IMR-90 (cell line): ENCODE measurements at regions of chr3 and their contacts with region 1.

Region 1: GRCh38 chr3:52291508-52292181 is 4.0 kb downstream of the GLYCTK start:
- DNase-seq: no peak
- ATAC-seq: peak; percentile 16; the same call in 1 of the 2 replicates
- H3K4me3 ChIP-seq: no peak overlapping the region
- H3K27ac ChIP-seq: no peak overlapping the region
- H3K4me1 ChIP-seq: peaks cover 6% of the 10 kb centered on the region
- H3K27me3 ChIP-seq: no peaks in the 10 kb centered on the region
- CTCF ChIP-seq: peak; percentile 65
- POLR2A ChIP-seq: no peak
- RAD21 ChIP-seq: peak; percentile 81

Region 2: DNA sequence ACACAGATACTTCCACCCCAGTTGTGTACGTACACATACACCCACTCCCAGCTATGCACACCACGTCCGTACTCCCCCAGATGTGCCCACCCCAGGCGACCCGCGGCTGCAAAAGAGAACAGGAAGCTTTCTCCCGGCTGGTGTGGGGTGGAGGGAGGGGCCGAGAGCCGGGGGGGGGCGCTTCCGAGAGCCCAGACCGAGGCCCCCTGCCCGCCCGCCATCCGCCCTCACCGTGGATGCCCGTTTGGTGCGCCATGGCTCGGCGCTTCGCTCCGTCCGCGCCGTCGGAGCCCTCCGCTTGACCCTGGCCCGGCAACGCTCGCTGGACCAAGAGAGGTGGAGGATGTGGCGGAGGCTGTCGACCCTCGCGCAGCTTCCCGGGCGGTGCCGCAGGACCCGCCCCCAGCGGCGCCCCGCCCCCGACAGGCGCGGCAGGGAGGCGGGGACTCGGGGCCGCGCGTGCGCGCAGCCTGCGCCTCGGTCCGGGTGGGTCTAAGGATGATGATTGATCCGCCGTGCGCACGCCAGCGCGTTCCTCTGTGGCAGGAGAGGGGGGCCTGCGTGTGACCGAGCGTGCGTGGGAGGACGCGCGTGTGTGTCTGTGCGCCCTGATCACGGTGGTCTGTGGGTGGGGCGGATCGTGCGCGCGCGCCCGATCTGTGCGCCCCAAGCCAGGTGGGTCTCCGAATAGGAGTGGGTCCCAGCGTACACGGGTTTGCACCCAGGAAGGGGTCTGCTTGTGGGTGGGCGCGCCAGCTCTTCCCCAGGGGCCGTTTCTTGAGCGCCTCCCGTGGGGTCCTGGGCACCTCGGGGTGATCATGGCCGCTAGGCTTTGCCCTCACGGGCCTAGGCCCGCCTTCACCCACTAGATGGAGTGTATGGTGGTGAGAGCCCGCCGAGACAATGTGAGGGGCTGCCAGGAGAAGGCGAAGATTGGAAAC is 52.6 kb before region 1 on chr3 and contains the start of gene TWF2:
- CTCF ChIA-PET with region 1: no interaction called
- POLR2A ChIA-PET with region 1: no interaction called
- dilution Hi-C with region 1: no loop called
- in situ Hi-C with region 1: no loop called
- intact Hi-C with region 1: no loop called
- DNase-seq: peak; percentile 78
- ATAC-seq: peak; percentile 84
- H3K4me3 ChIP-seq: peak within 1 kb of the TSS; percentile 83
- H3K27ac ChIP-seq: peak within 1 kb of the TSS; percentile 91
- H3K4me1 ChIP-seq: peaks cover 26% of the 10 kb centered on the region
- H3K27me3 ChIP-seq: no peaks in the 10 kb centered on the region
- CTCF ChIP-seq: 0 out of 2 replicates have a peak, but pooled peaks have one; percentile 25
- POLR2A ChIP-seq: peak; percentile 71
- RAD21 ChIP-seq: no peak
- total RNA-seq, gene TWF2: 105 and 111 TPM in 2 replicates

Region 3: DNA sequence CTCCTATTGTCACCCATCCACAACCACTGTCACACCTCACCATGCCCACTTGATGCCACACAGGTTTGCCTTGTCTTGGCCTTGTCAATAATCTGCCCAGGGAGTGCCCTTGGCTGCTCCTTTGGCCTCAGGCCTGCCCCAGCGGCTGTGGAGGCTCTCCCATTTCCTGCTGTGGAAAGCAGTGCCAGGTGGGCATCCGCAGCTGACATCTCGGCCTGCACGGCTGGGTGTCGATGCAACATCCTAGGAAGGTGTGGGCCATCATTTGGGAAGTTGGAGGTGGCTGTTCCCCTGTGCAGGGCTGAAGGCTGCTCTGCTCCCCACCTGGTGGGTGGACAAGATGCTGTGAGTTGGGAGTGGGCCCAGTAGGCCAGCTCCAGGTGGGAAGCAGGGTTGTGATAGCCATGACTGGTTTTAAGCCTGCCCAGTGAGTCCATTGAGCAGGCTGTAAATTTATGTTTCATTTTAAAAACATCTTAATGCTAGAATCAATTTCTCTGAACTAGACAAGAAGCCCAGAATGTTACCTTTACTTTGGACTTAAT is 37.0 kb after region 1 on chr3:
- CTCF ChIA-PET with region 1: no interaction called
- POLR2A ChIA-PET with region 1: no interaction called
- dilution Hi-C with region 1: no loop called
- in situ Hi-C with region 1: no loop called
- intact Hi-C with region 1: no loop called
- DNase-seq: no peak
- ATAC-seq: no peak
- H3K4me3 ChIP-seq: no peak overlapping the region
- H3K27ac ChIP-seq: no peak overlapping the region
- H3K4me1 ChIP-seq: no peaks in the 10 kb centered on the region
- H3K27me3 ChIP-seq: no peaks in the 10 kb centered on the region
- CTCF ChIP-seq: no peak
- POLR2A ChIP-seq: no peak
- RAD21 ChIP-seq: no peak

Region 4: GRCh38 chr3:52385157-52385556 is 93.5 kb after region 1 on chr3:
- CTCF ChIA-PET with region 1: no interaction called
- POLR2A ChIA-PET with region 1: no interaction called
- dilution Hi-C with region 1: no loop called
- in situ Hi-C with region 1: no loop called
- intact Hi-C with region 1: loop called (anchors 5 kb)
- DNase-seq: peak; percentile 41
- ATAC-seq: peak; percentile 80
- H3K4me3 ChIP-seq: no peak overlapping the region
- H3K27ac ChIP-seq: no peak overlapping the region
- H3K4me1 ChIP-seq: no peaks in the 10 kb centered on the region
- H3K27me3 ChIP-seq: peaks cover 3% of the 10 kb centered on the region
- CTCF ChIP-seq: peak; percentile 65
- POLR2A ChIP-seq: no peak
- RAD21 ChIP-seq: peak; percentile 51

Region 5: GRCh38 chr3:52428151-52429005 is 136.7 kb after region 1 on chr3:
- CTCF ChIA-PET with region 1: no interaction called
- POLR2A ChIA-PET with region 1: no interaction called
- dilution Hi-C with region 1: no loop called
- in situ Hi-C with region 1: no loop called
- intact Hi-C with region 1: no loop called
- DNase-seq: peak; percentile 83
- ATAC-seq: peak; percentile 98
- H3K4me3 ChIP-seq: no peak overlapping the region
- H3K27ac ChIP-seq: no peak overlapping the region
- H3K4me1 ChIP-seq: peaks cover 4% of the 10 kb centered on the region; the same call in 1 of the 2 replicates
- H3K27me3 ChIP-seq: peaks cover 5% of the 10 kb centered on the region; the same call in 1 of the 2 replicates
- CTCF ChIP-seq: peak; percentile 85
- POLR2A ChIP-seq: 0 out of 2 replicates have a peak, but pooled peaks have one; percentile 28
- RAD21 ChIP-seq: peak; percentile 82

Region 6: GRCh38 chr3:54046641-54047214 is 1755.1 kb after region 1 on chr3:
- CTCF ChIA-PET with region 1: no interaction called
- POLR2A ChIA-PET with region 1: no interaction called
- dilution Hi-C with region 1: no loop called
- in situ Hi-C with region 1: no loop called
- intact Hi-C with region 1: no loop called
- DNase-seq: no peak
- ATAC-seq: no peak
- H3K4me3 ChIP-seq: no peak overlapping the region
- H3K27ac ChIP-seq: no peak overlapping the region
- H3K4me1 ChIP-seq: no peaks in the 10 kb centered on the region
- H3K27me3 ChIP-seq: no peaks in the 10 kb centered on the region
- CTCF ChIP-seq: no peak
- POLR2A ChIP-seq: no peak
- RAD21 ChIP-seq: no peak